Heart left ventricle (tissue), 16 donors: ENCODE measurements at regions of chr1 and their contacts with region 1.

Region 1: DNA sequence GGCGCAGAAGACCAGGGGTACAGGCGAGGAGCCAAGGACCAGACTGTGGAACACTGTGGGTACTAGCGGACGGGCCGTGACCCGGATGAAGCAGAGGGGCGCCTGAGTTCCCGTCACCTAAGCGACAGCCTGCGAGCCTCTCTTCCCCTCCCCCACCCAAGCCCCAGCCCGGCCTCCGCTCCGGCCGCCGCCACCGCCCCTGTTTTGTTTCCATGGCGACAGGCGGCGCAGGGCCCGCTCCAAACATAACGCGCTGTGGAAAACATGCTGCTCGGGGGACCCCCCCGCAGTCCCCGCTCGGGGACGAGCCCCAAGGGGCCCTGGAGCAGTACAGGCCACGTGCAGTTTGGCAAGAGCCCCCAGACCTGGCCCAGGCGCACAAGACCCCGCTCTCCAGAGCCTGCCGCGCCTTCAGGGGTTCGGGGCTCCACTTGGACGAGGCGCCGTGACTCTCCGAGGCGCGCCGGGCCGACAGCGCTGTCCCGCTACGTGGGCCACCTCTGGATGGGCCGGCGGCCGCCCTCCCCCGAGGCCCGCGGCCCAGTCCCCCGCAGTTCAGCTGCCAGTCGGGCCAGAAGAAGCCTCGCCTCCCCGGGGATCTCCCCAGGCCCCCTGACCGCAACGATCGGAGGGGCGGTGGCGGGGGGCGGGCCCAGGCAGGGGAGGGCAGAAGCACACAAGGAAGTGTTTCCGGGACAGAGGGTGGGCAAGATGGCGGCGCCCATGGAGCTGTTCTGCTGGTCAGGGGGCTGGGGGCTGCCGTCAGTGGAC is at the start of gene MTX1:
- DNase-seq: peak; percentile 93 to 95 (median 95)
- ATAC-seq: peak; percentile 78 to 89 (median 87)
- H3K4me3 ChIP-seq: peak within 1 kb of the TSS; percentile 60 to 94 (median 77)
- H3K27ac ChIP-seq: peak within 1 kb of the TSS; percentile 95 to 100 (median 100)
- H3K4me1 ChIP-seq: peaks cover 0 to 47% (median 27%) of the 10 kb centered on the region in 12 donors
- H3K27me3 ChIP-seq: no peaks in the 10 kb centered on the region
- CTCF ChIP-seq: peak in 1 of 12 donors; percentile 12
- POLR2A ChIP-seq: peak in 1 of 2 donors; percentile 49
- total RNA-seq, gene MTX1: 14.1 to 32.2 (median 19.3) TPM

Region 2: GRCh38 chr1:155227261-155228095 is 18.8 kb after region 1 on chr1:
- intact Hi-C with region 1: loop called in 4 of 10 experiments (anchors 1 to 2 kb)
- DNase-seq: peak; percentile 98 to 99 (median 99)
- ATAC-seq: peak; percentile 99
- H3K4me3 ChIP-seq: peak overlapping the region; percentile 22 to 77 (median 62)
- H3K27ac ChIP-seq: peak overlapping the region; percentile 42 to 96 (median 88)
- H3K4me1 ChIP-seq: peaks cover 0 to 54% (median 17%) of the 10 kb centered on the region in 12 donors
- H3K27me3 ChIP-seq: no peaks in the 10 kb centered on the region
- CTCF ChIP-seq: no peak
- POLR2A ChIP-seq: peak in 1 of 2 donors; percentile 81

Region 3: DNA sequence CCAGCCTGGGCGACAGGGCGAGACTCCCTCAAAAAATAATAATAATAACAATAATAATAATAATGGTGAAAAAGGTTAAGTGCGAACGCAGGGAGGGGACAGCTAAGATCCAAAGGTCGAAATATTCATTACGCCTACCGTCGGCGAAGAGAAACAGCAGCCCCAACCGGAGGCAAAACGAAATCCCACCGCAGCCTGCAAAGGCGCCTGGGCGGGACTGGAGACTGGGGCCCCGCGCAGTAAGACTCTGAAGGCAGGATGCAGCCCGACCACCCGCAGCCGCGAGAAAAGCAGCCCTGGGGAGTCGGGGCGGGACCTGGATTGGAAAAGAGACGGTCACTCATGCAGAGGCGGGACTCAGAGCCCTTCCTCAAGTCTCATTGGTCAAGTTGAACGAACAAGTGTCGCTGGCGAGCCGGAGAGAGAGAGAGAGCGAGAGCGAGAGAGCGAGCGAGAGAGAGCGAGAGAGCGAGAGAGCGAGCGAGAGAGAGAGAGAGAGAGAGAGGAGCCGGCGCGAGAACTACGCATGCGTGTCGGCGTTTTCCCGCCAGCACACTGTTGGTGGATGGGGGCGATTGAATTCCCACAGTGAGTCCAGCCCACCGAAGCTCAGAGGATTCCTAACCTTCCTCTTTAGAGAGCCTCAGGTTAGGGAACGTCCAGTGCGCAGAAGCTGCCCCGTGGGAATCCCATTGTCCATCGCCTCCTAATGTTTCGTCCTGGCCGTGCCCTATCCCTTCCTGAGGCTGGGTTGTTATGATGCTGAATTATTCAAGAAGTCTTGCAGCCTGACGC is 35.8 kb after region 1 on chr1:
- intact Hi-C with region 1: loop called in 5 of 10 experiments (anchors 2 to 5 kb)
- DNase-seq: peak; percentile 97 to 99 (median 98)
- ATAC-seq: peak; percentile 94 to 96 (median 94)
- H3K4me3 ChIP-seq: peak overlapping the region; percentile 46 to 77 (median 67)
- H3K27ac ChIP-seq: peak overlapping the region; percentile 75 to 97 (median 90)
- H3K4me1 ChIP-seq: peaks cover 0 to 41% (median 22%) of the 10 kb centered on the region in 12 donors
- H3K27me3 ChIP-seq: peaks cover 0 to 4% (median 0%) of the 10 kb centered on the region in 9 donors
- CTCF ChIP-seq: peak in 6 of 12 donors; percentile 24 to 56 (median 34)
- POLR2A ChIP-seq: peak in 1 of 2 donors; percentile 88

Region 4: DNA sequence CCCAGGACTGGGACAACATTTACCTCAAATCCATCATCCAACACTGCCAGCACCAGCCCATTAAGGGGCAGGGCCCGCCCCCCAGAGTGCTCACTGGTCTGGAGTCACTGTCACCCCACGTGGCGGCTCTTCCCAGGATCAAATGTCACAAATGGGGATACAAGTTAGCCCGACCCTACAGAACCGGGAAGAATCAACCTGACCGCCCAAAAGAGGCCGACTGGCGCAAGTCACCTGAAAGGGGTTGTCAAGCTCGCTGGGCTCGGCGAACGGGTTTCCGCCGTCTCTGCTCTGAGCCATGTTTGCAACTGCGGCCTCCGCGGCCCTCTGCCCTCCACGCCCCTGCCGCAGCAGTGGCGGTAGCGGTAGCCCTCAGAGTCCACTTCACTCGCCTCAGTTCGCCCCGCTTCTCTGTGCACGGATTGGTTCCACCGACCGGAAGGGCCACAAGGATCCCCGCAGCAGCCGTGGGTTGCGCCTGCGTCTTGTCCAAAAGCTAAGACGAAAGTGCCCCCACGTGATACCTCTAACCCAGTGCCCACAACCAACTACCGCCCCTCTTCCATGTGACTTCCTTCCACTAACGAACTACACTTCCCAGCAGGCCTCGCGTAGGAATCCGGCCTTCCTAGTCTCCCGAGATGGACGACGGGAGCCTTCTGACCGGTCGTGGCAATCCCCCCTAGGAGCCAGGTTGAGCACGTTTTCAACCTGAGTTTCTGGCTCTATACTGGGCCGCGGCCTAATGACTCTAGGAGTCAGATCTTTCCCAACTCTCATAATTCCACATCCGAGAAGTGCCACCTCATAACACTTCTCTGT is 53.3 kb after region 1 on chr1 and contains the start of gene SCAMP3:
- intact Hi-C with region 1: no loop called
- DNase-seq: peak; percentile 95 to 98 (median 97)
- ATAC-seq: peak; percentile 97 to 99 (median 98)
- H3K4me3 ChIP-seq: peak within 1 kb of the TSS; percentile 61 to 98 (median 80)
- H3K27ac ChIP-seq: peak within 1 kb of the TSS in 11 of 12 donors; percentile 68 to 91 (median 84)
- H3K4me1 ChIP-seq: peaks cover 6 to 31% (median 20%) of the 10 kb centered on the region in 12 donors
- H3K27me3 ChIP-seq: no peaks in the 10 kb centered on the region
- CTCF ChIP-seq: no peak
- POLR2A ChIP-seq: peak; percentile 31 to 77
- total RNA-seq, gene SCAMP3: 51.2 to 92.8 (median 65.8) TPM